ENCODE measurements at regions of chr17 and their contacts with region 1.

Region 1: DNA sequence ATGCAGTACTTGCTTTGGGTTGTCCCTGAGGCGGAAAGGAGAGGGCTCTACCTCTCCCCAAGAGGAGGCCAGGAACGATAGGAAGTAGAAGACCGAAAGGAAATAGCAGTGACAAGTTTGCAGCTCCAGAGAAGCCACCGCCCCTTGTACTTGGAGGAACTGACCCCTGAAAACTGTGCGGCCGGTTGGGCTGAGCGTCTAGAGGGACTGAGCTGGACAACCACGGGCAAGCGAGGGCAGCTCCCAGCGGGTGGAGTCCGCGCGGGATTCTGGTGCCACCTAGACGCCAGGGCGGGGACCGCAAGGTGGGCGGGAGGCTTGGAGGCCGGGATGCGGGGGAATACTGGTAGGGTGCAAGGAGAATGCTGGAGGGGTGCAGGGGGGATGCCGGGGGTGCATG is 1.3 kb upstream of the SLC6A4 start:
- DNase-seq: no peak
- H3K4me3 ChIP-seq: peak overlapping the region in 3 of 4 donors; percentile 9 to 45 (median 33)
- H3K27ac ChIP-seq: no peak overlapping the region
- H3K4me1 ChIP-seq: peaks cover 18 to 42% (median 38%) of the 10 kb centered on the region in 4 donors
- H3K27me3 ChIP-seq: peaks cover 0 to 74% (median 30%) of the 10 kb centered on the region in 4 donors
- CTCF ChIP-seq: peak; percentile 33 to 59 (median 46)
- EP300 ChIP-seq: no peak
- POLR2A ChIP-seq: no peak

Region 2: DNA sequence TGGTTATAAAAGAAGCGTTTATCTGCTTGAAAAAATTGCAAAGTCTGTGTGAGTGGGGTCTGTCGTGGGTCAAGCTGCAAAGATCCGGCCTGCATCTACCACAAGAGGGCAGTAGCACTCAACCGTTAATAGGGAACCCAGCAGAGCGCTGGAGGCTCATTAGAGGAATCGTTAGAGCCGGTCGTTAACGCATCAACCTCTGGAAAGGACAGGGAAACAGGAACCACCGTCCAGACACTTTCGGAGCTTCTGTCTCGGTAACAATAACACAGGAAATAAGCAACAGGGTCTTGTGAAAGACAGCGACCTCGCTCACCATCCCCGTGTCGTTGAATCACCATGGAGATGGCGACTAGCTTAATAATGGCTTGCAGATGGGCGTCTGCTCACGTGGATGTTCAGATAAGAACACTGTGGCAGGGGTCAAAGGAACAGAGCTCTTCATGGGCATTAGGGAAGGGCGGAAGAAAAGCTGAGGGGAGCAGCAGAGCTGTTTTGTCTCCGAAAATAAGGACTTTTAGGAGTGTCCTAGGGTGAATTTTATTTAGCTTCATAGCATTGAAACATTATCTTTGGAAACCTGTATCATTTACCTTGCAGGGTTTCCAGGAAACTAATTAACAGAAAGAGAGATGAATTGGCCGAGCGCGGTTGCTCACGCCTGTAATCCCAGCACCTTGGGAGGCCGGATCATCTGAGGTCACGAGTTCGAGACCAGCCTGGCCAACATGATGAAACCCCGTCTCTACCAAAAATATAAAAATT is 132.0 kb before region 1 on chr17:
- intact Hi-C with region 1: loop called (anchors 5 kb)
- DNase-seq: peak; percentile 93
- H3K4me3 ChIP-seq: peak overlapping the region; percentile 40 to 51 (median 42)
- H3K27ac ChIP-seq: peak overlapping the region in 3 of 4 donors; percentile 12 to 39 (median 16)
- H3K4me1 ChIP-seq: peaks cover 4 to 9% (median 6%) of the 10 kb centered on the region in 4 donors
- H3K27me3 ChIP-seq: no peaks in the 10 kb centered on the region
- CTCF ChIP-seq: peak; percentile 84 to 90 (median 86)
- EP300 ChIP-seq: no peak
- POLR2A ChIP-seq: no peak

Region 3: DNA sequence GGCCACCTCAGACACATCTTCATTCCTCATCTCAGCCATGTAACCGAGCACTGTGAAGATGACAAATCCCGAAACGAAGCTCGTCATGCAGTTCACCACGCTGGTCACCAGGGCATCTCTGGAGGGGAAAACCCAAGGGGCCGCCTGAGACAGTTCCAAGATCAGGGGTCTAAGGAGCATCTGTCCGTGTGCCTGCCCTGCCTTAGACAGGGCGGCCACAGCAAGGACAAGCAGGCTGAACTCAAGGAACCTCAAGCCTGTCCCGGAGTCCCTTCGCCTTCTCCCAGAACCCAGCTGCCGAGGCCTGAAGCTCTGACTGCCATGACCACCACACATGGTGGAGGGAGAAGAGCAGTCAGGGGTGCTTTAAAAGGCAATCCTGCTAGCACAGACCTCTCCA is 24.0 kb before region 1 on chr17:
- intact Hi-C with region 1: no loop called
- DNase-seq: no peak
- H3K4me3 ChIP-seq: no peak overlapping the region
- H3K27ac ChIP-seq: no peak overlapping the region
- H3K4me1 ChIP-seq: no peaks in the 10 kb centered on the region
- H3K27me3 ChIP-seq: peaks cover 0 to 7% (median 0%) of the 10 kb centered on the region in 4 donors
- CTCF ChIP-seq: no peak
- EP300 ChIP-seq: no peak
- POLR2A ChIP-seq: no peak

Region 4: GRCh38 chr17:30309591-30309990 is 72.8 kb after region 1 on chr17:
- intact Hi-C with region 1: no loop called
- DNase-seq: no peak
- H3K4me3 ChIP-seq: no peak overlapping the region
- H3K27ac ChIP-seq: no peak overlapping the region
- H3K4me1 ChIP-seq: no peaks in the 10 kb centered on the region
- H3K27me3 ChIP-seq: no peaks in the 10 kb centered on the region
- CTCF ChIP-seq: no peak
- EP300 ChIP-seq: no peak
- POLR2A ChIP-seq: no peak

Region 5: DNA sequence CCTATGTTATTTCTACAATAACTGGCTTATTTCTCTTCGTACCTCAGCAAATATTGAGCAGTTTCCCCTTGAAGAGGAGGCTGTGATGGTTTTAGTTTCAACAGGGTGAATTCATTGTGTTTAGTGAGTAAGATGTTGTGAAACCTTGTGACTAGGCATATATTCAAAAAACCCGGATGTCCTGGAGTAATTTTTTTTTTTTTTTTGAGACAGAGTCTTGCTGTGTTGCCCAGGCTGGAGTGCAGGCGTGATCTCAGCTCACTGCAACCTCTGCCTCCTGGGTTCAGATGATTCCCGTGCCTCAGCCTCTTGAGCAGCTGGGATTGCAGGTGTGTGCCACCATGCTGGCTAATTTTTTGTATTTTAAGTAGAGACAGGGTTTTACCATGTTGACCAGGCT is 153.1 kb after region 1 on chr17:
- intact Hi-C with region 1: no loop called
- DNase-seq: no peak
- H3K4me3 ChIP-seq: no peak overlapping the region
- H3K27ac ChIP-seq: no peak overlapping the region
- H3K4me1 ChIP-seq: peaks cover 0 to 58% (median 38%) of the 10 kb centered on the region in 4 donors
- H3K27me3 ChIP-seq: no peaks in the 10 kb centered on the region
- CTCF ChIP-seq: no peak
- EP300 ChIP-seq: no peak
- POLR2A ChIP-seq: no peak

Measured in esophagus muscularis mucosa (tissue), 4 donors.